Esophagus muscularis mucosa (tissue), 4 donors: ENCODE measurements at regions of chr2 and their contacts with region 1.

Region 1: DNA sequence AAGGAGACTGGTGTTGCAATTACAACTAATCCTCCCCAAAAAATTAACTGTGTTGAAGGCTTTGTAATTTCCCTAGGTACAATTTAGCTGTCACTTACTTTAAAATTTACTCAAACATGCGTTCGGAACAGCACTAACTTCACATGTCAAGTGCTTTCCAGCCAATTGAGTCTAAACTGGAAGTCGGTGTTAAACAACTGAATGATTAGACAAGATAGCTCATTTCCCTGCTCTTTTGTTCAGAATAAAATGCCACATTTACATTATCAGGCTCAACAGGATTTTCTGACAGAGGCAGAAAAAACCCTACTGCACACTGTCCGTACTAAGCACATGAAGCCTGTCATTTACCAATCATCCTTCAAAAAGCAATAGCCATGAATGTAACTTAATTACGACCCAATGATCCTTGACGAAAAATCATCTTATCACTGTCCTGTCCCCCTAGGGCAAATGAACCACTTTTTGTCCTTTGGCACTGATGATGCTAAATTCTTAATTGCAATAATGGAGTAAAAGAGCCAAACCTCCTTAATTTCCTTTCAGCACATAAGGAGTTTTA is 56.0 kb downstream of the LRPPRC start:
- DNase-seq: no peak
- H3K4me3 ChIP-seq: no peak overlapping the region
- H3K27ac ChIP-seq: no peak overlapping the region
- H3K4me1 ChIP-seq: peaks cover 0 to 7% (median 2%) of the 10 kb centered on the region in 4 donors
- H3K27me3 ChIP-seq: no peaks in the 10 kb centered on the region
- CTCF ChIP-seq: no peak
- EP300 ChIP-seq: no peak
- POLR2A ChIP-seq: no peak

Region 2: GRCh38 chr2:43977677-43978375 is 38.0 kb after region 1 on chr2:
- intact Hi-C with region 1: loop called (anchors 5 kb)
- DNase-seq: no peak
- H3K4me3 ChIP-seq: no peak overlapping the region
- H3K27ac ChIP-seq: no peak overlapping the region
- H3K4me1 ChIP-seq: peaks cover 0 to 1% (median under 1%) of the 10 kb centered on the region in 4 donors
- H3K27me3 ChIP-seq: no peaks in the 10 kb centered on the region
- CTCF ChIP-seq: no peak
- EP300 ChIP-seq: no peak
- POLR2A ChIP-seq: no peak